ENCODE measurements at regions of chr15 and their contacts with region 1.

Region 1: DNA sequence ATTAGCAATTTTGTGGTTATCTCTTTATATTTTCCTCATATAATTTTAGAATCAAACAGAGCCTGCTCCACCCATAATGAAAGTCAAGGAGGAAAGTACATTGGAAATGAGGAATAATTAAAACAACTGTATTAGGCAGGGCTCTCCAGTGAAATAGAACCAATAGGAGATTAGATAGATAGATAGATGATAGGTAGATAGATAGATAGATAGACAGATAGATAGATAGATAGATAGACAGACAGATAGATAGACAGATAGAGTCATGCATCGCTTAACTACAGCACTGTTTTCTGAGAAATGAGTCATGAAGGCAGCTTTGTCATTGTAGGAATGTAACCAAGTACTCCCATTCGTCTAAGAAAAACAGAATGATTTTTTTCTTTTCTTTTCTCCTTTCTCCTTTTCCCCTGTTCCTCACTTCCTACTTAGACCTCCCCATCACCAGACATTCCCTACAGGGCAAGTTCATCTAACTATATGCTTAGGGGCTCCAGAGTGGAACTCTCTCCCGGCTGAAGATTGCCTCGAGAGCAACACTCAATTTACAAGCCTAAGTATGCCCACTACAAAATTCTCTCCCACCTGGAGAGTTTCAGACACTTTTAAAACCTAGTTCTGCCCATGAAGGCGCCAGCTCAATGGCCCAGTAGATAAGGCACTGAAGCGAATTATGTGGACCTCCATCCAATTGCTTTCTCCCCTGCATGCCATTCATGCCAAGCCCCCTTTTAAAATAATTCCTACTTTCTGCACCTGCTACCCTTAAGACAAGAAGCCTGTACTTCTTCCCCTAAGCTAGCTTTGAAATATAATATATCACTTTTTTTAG is 53.3 kb upstream of the LIPC start:
- DNase-seq: no peak
- H3K4me3 Mint-ChIP-seq: no peak overlapping the region
- H3K27ac Mint-ChIP-seq: no peak overlapping the region
- H3K4me1 Mint-ChIP-seq: no peaks in the 10 kb centered on the region
- H3K27me3 Mint-ChIP-seq: no peaks in the 10 kb centered on the region

Region 2: GRCh38 chr15:58309963-58310928 is 68.2 kb before region 1 on chr15:
- intact Hi-C with region 1: loop called (anchors 10 kb)
- DNase-seq: no peak
- H3K4me3 Mint-ChIP-seq: no peak overlapping the region
- H3K27ac Mint-ChIP-seq: no peak overlapping the region
- H3K4me1 Mint-ChIP-seq: peaks cover 24% of the 10 kb centered on the region
- H3K27me3 Mint-ChIP-seq: no peaks in the 10 kb centered on the region